Left lung (tissue), 14 donors: ENCODE measurements at regions of chr12 and their contacts with region 1.

Region 1: GRCh38 chr12:89395712-89396111 is 43.4 kb upstream of the DUSP6 start:
- DNase-seq: no peak
- ATAC-seq: no peak
- H3K4me3 ChIP-seq: no peak overlapping the region
- H3K27ac ChIP-seq: no peak overlapping the region
- H3K4me1 ChIP-seq: peaks cover 3 to 50% of the 10 kb centered on the region in 2 donors
- H3K27me3 ChIP-seq: no peaks in the 10 kb centered on the region
- CTCF ChIP-seq: no peak

Region 2: GRCh38 chr12:89427508-89428156 is 31.9 kb after region 1 on chr12:
- intact Hi-C with region 1: loop called in 1 of 2 experiments (anchors 2 kb)
- DNase-seq: no peak
- ATAC-seq: peak; percentile 66
- H3K4me3 ChIP-seq: no peak overlapping the region
- H3K27ac ChIP-seq: peak overlapping the region in 1 of 2 donors; percentile 57
- H3K4me1 ChIP-seq: peaks cover 0 to 18% of the 10 kb centered on the region in 2 donors
- H3K27me3 ChIP-seq: no peaks in the 10 kb centered on the region
- CTCF ChIP-seq: no peak

Region 3: GRCh38 chr12:89618107-89618862 is 222.6 kb after region 1 on chr12:
- intact Hi-C with region 1: no loop called
- DNase-seq: no peak
- ATAC-seq: no peak
- H3K4me3 ChIP-seq: no peak overlapping the region
- H3K27ac ChIP-seq: no peak overlapping the region
- H3K4me1 ChIP-seq: no peaks in the 10 kb centered on the region
- H3K27me3 ChIP-seq: no peaks in the 10 kb centered on the region
- CTCF ChIP-seq: no peak